Dendritic cell treated with granulocyte-macrophage colony-stimulating factor and Interleukin-4, amounts not matched to agents 40 ng/mL and 50 ng/mL, for 4 days (primary cell): ENCODE measurements at regions of chr20 and their contacts with region 1.

Region 1: DNA sequence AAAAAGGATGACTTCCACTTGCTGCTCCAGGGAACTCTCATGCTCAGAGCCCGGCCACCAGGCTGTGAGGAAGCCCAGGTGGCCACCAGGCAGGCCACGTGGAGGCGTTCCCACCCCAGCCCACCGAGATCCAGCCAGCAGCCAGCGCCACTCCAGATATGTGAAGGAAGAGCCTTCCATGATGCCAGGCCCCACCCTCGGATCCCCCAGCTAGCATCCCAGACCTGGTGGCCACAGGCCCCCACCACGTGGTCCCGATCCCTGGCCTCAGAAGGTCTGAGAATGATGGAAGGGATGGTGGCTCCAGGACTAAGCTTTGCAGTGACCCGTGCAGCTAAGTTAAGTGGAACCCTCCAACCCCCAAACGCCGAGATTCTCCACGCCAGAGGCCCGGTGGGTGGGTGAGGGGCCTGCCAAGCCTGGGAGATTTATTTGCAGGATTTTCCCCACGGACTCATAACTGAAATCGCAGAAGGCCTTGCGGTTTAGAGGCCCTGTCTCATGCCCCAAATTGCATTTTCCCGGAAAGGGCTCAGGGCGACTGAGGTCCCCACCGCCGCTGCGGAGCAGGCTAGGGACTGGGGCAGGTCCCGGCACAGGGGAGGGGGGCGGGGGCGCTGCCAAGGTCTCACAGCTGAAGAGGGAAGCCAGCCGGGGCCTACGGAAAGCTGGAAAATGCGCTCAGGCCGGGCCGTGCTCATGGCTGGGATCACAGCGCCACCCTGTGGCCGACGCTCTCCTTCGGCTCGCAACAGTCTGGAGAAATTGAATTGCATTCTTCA is 31.1 kb upstream of the CST7 start:
- H3K4me3 Mint-ChIP-seq: no peak overlapping the region
- H3K27ac Mint-ChIP-seq: peak overlapping the region; percentile 35
- H3K4me1 Mint-ChIP-seq: no peaks in the 10 kb centered on the region
- H3K27me3 Mint-ChIP-seq: peaks cover 7% of the 10 kb centered on the region

Region 2: DNA sequence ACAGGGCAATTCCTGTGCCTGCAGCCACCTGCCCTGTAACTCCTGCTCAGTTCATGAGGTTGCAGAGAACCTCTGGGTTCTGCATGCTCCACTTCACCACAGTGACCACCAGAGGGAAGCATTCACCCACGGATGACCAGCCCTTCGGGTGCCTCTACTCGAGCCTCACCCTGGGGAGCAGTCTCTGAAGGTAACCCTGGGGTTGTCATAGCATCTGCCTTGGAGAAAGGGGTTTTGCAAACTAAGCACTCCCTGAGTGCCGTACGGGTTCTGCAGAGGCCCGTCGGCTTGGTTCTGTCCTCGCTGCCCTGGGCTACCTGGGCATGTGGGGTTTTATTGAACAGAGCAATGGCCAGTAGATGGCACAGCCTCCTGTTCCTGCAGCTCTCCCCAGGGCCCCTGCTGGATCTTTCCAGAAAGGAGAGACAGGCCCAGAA is 1028.2 kb before region 1 on chr20:
- intact Hi-C with region 1: loop called (anchors 5 kb)
- H3K4me3 Mint-ChIP-seq: no peak overlapping the region
- H3K27ac Mint-ChIP-seq: no peak overlapping the region
- H3K4me1 Mint-ChIP-seq: no peaks in the 10 kb centered on the region
- H3K27me3 Mint-ChIP-seq: no peaks in the 10 kb centered on the region

Region 3: GRCh38 chr20:23937303-23938117 is 980.5 kb before region 1 on chr20:
- intact Hi-C with region 1: loop called (anchors 5 kb)
- H3K4me3 Mint-ChIP-seq: no peak overlapping the region
- H3K27ac Mint-ChIP-seq: no peak overlapping the region
- H3K4me1 Mint-ChIP-seq: no peaks in the 10 kb centered on the region
- H3K27me3 Mint-ChIP-seq: no peaks in the 10 kb centered on the region

Region 4: GRCh38 chr20:24102290-24102689 is 815.7 kb before region 1 on chr20:
- intact Hi-C with region 1: loop called (anchors 1 kb)
- H3K4me3 Mint-ChIP-seq: no peak overlapping the region
- H3K27ac Mint-ChIP-seq: no peak overlapping the region
- H3K4me1 Mint-ChIP-seq: no peaks in the 10 kb centered on the region
- H3K27me3 Mint-ChIP-seq: peaks cover 1% of the 10 kb centered on the region

Region 5: DNA sequence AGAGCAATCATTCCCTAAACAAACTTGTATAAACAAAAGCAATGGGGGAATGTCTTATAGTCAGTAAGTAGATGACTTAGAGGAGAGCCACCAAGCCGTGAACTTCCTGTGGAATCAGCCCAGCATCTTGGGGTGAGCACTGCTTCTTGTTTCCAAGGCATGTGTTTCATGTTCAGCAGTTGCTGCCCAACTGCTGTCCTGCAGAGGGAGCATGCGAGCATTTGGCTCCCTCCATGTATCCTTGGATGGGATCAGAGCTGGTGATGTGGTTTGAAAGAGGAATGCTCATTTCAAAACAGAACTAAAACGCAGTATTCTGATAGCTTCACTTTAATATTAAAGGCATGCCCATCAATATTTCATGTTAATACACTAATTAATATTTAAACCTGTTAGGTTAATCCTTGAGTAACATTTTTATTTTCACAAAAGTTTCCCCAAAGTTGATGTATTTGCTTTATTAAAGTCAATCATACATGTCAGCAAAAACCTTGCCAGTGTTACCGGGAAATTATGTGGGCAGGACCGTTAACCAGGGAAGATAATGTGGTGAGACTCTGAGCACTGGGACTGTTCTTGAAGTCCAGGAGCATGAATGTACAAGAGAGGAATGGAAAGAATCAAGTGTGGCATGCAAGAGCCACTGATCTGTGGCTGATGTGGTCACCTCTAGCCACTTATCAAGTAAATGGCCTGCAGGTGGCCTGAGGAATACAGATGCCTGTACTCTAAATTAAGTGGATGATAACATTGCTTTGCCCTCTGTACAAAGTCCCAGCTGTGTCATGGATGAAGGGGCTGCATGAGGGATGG is 757.2 kb before region 1 on chr20:
- intact Hi-C with region 1: loop called (anchors 1 kb)
- H3K4me3 Mint-ChIP-seq: no peak overlapping the region
- H3K27ac Mint-ChIP-seq: no peak overlapping the region
- H3K4me1 Mint-ChIP-seq: no peaks in the 10 kb centered on the region
- H3K27me3 Mint-ChIP-seq: no peaks in the 10 kb centered on the region

Region 6: GRCh38 chr20:24328901-24329300 is 589.1 kb before region 1 on chr20:
- intact Hi-C with region 1: no loop called
- H3K4me3 Mint-ChIP-seq: no peak overlapping the region
- H3K27ac Mint-ChIP-seq: no peak overlapping the region
- H3K4me1 Mint-ChIP-seq: no peaks in the 10 kb centered on the region
- H3K27me3 Mint-ChIP-seq: no peaks in the 10 kb centered on the region

Region 7: GRCh38 chr20:24895898-24896658 is 21.9 kb before region 1 on chr20:
- intact Hi-C with region 1: no loop called
- H3K4me3 Mint-ChIP-seq: no peak overlapping the region
- H3K27ac Mint-ChIP-seq: no peak overlapping the region
- H3K4me1 Mint-ChIP-seq: peaks cover 5% of the 10 kb centered on the region
- H3K27me3 Mint-ChIP-seq: peaks cover 3% of the 10 kb centered on the region

Region 8: GRCh38 chr20:25223179-25223661 is 305.2 kb after region 1 on chr20:
- intact Hi-C with region 1: no loop called
- H3K4me3 Mint-ChIP-seq: no peak overlapping the region
- H3K27ac Mint-ChIP-seq: no peak overlapping the region
- H3K4me1 Mint-ChIP-seq: peaks cover 20% of the 10 kb centered on the region
- H3K27me3 Mint-ChIP-seq: no peaks in the 10 kb centered on the region

Region 9: GRCh38 chr20:25247956-25248785 is 330.2 kb after region 1 on chr20 and contains the start of gene PYGB:
- intact Hi-C with region 1: no loop called
- H3K4me3 Mint-ChIP-seq: peak within 1 kb of the TSS; percentile 91
- H3K27ac Mint-ChIP-seq: peak within 1 kb of the TSS; percentile 82
- H3K4me1 Mint-ChIP-seq: peaks cover 59% of the 10 kb centered on the region
- H3K27me3 Mint-ChIP-seq: peaks cover 6% of the 10 kb centered on the region